ENCODE measurements at regions of chr17 and their contacts with region 1.

Region 1: DNA sequence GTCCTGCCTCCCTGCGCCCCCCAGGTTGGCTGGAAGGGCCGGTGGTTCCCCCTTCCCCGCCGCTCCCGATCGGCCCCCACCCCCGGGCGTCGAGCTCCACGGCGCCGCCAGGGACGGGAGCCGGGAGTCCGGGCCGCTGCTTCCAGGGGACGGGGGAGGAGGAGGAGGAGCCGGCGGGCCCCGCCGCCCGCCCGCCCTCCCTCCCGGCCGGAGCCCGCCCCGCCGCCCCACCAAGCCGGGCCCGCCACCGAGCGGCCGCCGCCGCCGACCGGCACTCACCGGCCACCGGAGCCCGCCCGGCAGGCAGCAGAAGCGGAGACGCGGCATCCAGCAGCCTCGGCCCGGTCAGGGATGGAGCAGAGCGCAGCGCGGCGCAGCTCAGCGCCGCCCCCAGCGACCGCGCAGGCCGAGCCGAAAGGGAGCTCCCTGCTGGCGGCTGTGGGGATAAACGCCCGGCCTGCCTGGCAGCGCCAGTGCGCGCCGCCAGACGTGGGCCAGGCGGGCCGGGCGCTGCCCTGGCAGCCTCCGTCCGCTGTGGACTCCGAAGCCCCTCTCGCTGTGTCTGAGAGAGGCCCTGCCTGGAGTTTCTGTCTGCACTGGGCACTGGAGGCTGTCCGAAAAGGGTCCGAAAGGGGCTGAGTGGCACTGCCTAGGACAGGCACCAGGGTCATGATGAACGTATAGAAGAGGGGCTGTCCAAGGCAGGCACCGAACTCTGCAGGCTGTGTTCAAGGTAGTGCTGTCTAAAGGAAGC is at the start of gene MYO18A:
- DNase-seq: peak; percentile 83 to 93
- ATAC-seq: peak; percentile 92
- H3K4me3 ChIP-seq: peak within 1 kb of the TSS; percentile 41 to 88
- H3K27ac ChIP-seq: peak within 1 kb of the TSS; percentile 9 to 81
- H3K4me1 ChIP-seq: no peaks in the 10 kb centered on the region
- H3K27me3 ChIP-seq: no peaks in the 10 kb centered on the region
- total RNA-seq, gene MYO18A: 102 to 116 TPM

Region 2: DNA sequence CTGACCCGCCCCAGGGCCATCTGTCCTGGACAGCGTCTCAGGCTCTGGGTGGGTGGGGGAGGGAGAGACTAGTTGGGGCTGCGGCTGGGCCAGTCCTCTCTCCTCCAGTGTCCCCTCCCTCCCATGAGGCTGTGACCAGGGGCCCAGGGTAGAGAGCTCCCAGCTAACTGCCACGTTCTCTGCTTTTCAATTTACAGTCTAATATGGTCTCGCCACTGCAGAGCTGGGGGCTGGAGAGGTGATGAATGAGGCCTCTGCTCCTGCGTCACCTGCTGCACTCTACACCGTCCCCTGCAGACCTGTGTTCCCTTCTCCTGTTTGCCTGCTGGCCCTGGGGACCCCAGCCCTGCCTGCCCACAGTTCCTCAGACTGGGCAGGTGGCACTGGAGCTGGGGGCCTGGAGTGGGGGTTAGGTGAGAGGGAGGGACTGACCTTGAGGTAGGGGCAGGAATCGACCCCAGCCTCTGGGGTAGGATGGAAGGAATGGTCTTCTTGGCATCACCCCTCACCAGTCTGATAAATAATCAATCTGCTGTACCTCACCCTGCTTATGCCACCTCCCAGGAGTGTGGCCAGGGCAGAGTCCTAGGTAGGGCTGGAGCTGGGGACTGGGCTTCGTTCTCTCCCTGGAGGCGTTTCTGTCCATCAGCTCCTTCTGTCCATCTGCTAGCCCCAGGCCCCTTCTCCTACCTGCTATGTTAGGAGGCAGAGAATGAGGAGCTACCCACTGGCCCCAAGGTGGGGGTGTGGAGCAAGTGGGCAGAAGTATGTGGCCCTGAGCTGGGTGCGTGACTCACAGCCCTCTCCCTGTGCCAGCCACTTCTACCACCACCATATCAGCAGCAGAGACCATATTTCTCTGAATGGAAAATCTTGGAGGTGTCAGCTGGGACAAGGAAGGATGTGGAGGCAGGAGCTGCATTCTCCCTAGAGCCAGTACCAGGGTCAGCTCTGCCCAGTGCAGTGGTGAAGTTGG is 187.3 kb before region 1 on chr17:
- intact Hi-C with region 1: no loop called
- DNase-seq: no peak
- ATAC-seq: no peak
- H3K4me3 ChIP-seq: no peak overlapping the region
- H3K27ac ChIP-seq: no peak overlapping the region
- H3K4me1 ChIP-seq: no peaks in the 10 kb centered on the region
- H3K27me3 ChIP-seq: no peaks in the 10 kb centered on the region

Region 3: DNA sequence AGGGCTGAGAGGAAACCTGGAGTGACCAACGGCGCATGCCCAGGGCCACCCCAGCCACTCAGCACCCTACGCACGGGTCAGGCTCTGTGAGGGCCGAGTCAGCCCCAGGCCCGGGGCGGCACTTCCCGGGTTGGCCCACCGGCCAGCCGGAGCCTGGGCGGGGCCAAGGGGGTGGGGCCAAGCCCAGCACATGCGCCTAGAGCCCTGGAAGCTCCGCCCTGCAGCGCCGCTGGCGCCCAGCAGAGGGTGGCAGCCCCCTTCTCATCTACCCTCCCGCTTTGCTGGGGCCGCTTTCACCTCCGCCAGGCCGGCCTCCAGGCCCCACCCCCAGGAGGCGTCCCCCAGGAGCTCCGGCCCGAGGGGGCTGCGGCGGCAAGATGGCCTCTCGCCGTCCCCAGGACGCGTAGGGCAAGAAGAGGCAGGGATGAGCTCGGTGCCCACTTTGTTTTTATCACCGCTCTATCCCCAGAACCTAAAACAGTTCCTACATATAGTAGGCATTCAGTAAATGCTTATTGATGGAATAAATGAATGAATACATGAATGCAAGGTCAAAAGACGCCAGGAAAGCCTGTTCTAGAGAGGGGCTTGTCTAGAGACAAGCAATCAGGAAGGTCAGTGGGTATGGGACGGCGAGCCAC is 31.3 kb before region 1 on chr17:
- intact Hi-C with region 1: loop called (anchors 1 to 5 kb)
- DNase-seq: peak; percentile 97 to 98
- ATAC-seq: peak; percentile 99
- H3K4me3 ChIP-seq: peak overlapping the region in 1 of 2 donors; percentile 37
- H3K27ac ChIP-seq: peak overlapping the region in 1 of 2 donors; percentile 65
- H3K4me1 ChIP-seq: no peaks in the 10 kb centered on the region
- H3K27me3 ChIP-seq: no peaks in the 10 kb centered on the region

Region 4: GRCh38 chr17:29219378-29220047 is 39.3 kb after region 1 on chr17:
- intact Hi-C with region 1: loop called in 1 of 2 experiments (anchors 5 kb)
- DNase-seq: peak; percentile 84 to 88
- ATAC-seq: peak; percentile 91
- H3K4me3 ChIP-seq: no peak overlapping the region
- H3K27ac ChIP-seq: no peak overlapping the region
- H3K4me1 ChIP-seq: no peaks in the 10 kb centered on the region
- H3K27me3 ChIP-seq: no peaks in the 10 kb centered on the region

Measured in aorta (tissue), 5 donors.